Breast epithelium (tissue), 4 donors: ENCODE measurements at regions of chr11 and their contacts with region 1.

Region 1: DNA sequence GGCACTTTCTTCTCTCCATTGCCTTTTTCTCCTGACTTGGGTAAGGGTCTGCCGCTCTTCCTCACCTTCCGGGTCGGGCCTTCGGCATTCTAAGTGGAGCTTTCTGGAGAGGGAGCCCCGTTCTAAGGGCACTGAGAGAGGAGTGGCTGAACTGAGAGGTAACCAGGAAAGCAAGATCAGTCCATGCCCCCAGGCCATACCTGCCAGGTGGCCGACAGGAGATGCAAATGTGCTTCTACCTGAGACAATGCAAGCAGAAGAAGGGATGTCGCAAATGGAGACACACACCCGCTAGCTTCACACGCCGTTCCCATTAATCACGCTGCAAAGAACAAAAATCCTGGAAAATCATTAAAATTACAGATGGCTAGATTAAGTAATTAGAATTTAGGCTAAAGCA is 156.4 kb upstream of the TBCEL start:
- DNase-seq: no peak
- H3K4me3 ChIP-seq: no peak overlapping the region
- H3K27ac ChIP-seq: no peak overlapping the region
- H3K4me1 ChIP-seq: no peaks in the 10 kb centered on the region
- H3K27me3 ChIP-seq: peaks cover 0 to 32% of the 10 kb centered on the region in 2 donors
- CTCF ChIP-seq: no peak
- POLR2A ChIP-seq: no peak

Region 2: GRCh38 chr11:120807421-120808150 is 59.9 kb before region 1 on chr11:
- intact Hi-C with region 1: loop called (anchors 2 kb)
- DNase-seq: no peak
- H3K4me3 ChIP-seq: no peak overlapping the region
- H3K27ac ChIP-seq: no peak overlapping the region
- H3K4me1 ChIP-seq: no peaks in the 10 kb centered on the region
- H3K27me3 ChIP-seq: peaks cover 0 to 7% of the 10 kb centered on the region in 2 donors
- CTCF ChIP-seq: no peak
- POLR2A ChIP-seq: no peak